ENCODE measurements at regions of chr7 and their contacts with region 1.

Region 1: DNA sequence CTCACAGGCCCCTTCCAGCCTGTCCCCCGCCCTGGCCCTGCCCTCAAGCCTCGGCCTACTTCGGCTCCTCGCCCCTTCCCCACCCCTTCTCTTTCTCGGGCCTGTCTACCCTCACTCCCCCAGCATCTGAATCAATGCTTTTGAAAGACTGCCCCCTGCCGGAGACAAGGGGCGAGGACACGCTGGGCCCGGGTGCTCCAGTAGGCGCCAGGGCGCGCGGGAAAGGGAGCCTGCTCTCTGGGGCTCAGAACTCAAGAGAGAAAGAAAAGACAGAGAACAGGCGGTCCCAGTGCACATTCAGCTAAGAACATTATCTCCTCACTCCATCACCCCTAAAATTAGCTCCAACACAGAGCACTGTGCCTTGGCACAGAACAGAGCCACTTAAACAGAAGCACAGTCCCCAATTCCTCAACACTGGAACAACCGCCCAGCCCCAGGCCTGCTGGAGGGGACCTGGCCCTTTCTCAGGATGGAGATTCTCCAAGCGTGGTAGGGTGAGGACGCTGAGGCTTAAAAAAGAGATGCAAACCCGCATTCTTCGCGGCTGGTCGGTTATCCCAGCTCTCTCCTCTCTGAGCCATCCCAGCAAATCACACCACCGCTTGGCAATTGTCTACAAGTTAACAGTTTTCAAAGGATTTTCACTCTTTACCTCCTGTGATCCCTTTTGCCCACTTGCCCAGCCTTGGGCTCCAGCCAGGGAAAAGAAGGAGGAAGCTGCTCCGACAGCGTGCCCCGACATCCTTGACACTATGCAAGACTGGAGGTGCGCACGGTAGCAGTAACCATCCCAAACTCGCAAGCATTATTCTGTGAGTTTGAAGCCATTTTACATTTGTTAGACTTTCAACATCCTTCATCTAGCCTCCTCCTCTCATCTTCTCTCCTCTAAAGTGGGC is 2.1 kb downstream of the GIGYF1 start:
- DNase-seq: peak; percentile 89
- H3K4me3 Mint-ChIP-seq: peak overlapping the region; percentile 96
- H3K27ac Mint-ChIP-seq: peak overlapping the region; percentile 22
- H3K4me1 Mint-ChIP-seq: peaks cover 40% of the 10 kb centered on the region
- H3K27me3 Mint-ChIP-seq: peaks cover 9% of the 10 kb centered on the region

Region 2: GRCh38 chr7:100675581-100676350 is 16.2 kb before region 1 on chr7:
- CTCF ChIA-PET with region 1: interaction called, 18 read pairs
- POLR2A ChIA-PET with region 1: no interaction called
- DNase-seq: peak; percentile 89
- H3K4me3 Mint-ChIP-seq: peak overlapping the region; percentile 86
- H3K27ac Mint-ChIP-seq: peak overlapping the region; percentile 88
- H3K4me1 Mint-ChIP-seq: peaks cover 42% of the 10 kb centered on the region
- H3K27me3 Mint-ChIP-seq: peaks cover 5% of the 10 kb centered on the region

Measured in activated CD4-positive, alpha-beta T cell treated with anti-CD3 and anti-CD28 coated beads, Interleukin-2, amount 10 ng/mL, durations not matched to agents 7 days and 5 days (primary cell).